Esophagus squamous epithelium (tissue), 5 donors: ENCODE measurements at regions of chr14 and their contacts with region 1.

Region 1: DNA sequence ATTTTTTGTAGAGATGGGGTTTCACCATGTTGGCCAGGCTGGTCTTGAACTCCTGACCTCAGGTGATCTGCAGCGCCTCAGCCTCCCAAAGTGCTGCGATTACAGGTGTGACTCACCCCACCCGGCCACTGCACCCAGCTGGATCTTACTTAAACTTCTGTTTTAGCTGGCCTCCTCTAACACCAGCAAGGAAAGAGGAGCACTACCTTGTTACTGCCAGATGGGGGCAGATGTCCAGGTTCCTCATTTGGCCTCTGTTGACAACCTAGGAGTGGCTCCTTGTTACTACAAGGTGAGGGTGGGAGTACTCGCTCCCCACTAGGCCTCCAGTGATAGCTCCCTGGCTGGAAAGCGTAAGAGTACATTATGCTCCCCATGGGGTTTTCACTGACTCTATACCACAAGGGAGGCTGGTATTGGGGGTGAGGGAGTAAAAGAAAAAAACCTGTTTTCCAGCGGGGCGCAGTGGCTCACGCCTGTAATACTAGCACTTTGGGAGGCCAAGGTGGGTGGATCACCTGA is 13.1 kb upstream of the ARF6 start:
- DNase-seq: no peak
- H3K4me3 ChIP-seq: no peak overlapping the region
- H3K27ac ChIP-seq: peak overlapping the region; percentile 51 to 86 (median 72)
- H3K4me1 ChIP-seq: peaks cover 0 to 37% (median 12%) of the 10 kb centered on the region in 3 donors
- H3K27me3 ChIP-seq: no peaks in the 10 kb centered on the region
- CTCF ChIP-seq: peak; percentile 20 to 84 (median 60)
- POLR2A ChIP-seq: no peak

Region 2: DNA sequence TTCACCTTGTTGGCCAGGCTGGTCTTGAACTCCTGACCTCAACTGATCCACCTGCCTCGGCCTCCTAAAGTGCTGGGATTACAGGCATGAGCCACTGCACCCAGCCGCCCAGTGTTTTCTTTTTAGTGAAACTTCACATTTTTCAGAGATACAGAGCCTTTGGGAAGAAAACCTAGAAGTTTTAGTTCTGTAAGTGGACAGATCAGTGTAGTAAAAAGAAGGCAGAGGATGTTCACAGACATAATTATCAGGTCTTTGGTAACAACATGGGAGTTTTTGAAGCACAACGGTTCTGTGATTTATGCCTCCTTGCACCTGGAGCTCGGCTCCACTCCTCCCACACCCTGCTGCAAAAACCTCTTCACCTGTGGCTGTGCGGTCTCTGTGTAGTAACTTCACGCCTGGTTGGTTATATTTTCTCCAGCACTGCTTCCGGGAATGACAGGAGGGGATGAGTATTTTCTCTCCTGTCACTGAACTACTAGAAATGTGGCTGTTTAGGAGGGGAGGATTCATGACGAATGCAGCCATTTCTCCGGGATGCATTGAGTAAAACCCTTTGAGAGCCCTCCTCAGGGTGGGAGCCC is 80.2 kb after region 1 on chr14:
- intact Hi-C with region 1: loop called (anchors 10 kb)
- DNase-seq: no peak
- H3K4me3 ChIP-seq: peak overlapping the region in 1 of 4 donors; percentile 10
- H3K27ac ChIP-seq: peak overlapping the region; percentile 70 to 91 (median 88)
- H3K4me1 ChIP-seq: peaks cover 11 to 71% (median 35%) of the 10 kb centered on the region in 3 donors
- H3K27me3 ChIP-seq: no peaks in the 10 kb centered on the region
- CTCF ChIP-seq: no peak
- POLR2A ChIP-seq: no peak

Region 3: DNA sequence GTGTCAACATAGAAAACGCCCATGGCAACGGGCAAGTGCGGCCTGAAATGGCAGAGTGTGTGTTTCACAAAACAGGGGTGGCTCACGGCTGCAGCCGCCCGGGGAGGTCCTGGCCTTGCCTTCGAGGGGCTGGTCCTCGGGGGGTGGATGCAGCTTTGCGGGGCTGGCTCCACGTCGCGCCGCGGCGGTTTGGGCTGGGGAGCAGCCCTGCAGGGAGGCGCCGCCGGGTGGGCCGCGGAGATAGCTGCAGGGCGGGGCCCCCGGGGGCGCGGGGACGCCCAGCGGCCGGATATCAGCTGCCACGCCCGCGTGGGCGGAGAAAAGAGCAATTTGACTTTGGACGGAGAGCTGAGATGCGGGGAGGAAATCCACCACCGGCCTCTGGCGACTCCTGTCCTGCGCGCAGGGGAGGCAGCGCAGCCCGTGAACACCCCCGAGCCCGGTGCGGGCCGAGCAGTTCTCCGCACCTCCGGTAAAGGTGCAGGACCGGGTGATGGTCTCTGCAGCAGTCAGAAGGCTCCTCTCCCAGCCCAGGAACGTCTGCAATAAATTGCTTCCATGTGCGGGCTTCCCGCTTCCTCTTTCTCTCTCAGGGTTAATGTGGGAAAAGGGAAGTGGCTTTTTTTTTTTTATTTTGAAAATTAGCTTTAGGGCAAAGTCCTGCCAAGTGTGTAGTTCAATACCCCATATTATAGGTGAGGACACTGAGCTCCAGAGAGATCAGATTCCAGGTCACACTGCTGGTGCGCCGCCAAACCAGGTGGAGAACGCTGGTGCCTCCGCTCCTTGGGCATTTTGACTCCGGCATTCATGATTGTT is 123.7 kb after region 1 on chr14:
- intact Hi-C with region 1: loop called (anchors 10 kb)
- DNase-seq: peak; percentile 43
- H3K4me3 ChIP-seq: peak overlapping the region; percentile 33 to 67 (median 56)
- H3K27ac ChIP-seq: peak overlapping the region; percentile 92 to 98 (median 96)
- H3K4me1 ChIP-seq: peaks cover 55 to 86% (median 57%) of the 10 kb centered on the region in 3 donors
- H3K27me3 ChIP-seq: no peaks in the 10 kb centered on the region
- CTCF ChIP-seq: peak in 5 of 6 experiments; percentile 16 to 47 (median 34)
- POLR2A ChIP-seq: peak in 2 of 4 donors; percentile 62 to 87

Region 4: DNA sequence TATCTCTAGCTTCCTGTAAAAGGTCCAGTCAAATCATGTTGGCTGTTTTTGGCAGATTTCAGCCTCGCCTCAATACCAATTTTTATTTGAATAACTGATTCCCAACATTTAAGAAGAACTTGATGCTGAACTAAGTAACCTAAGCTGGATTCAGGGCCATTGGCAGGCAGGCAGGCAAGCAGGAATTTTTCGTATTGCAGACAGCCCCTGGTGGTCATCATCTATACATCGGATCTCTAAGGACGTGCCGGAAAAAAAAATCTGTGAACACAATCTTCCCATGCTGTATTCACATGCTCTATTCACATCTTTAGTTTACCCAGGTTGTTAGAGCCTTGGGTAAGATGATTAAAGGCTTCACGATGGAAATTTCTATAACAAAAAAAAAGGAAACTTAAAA is 229.6 kb after region 1 on chr14:
- intact Hi-C with region 1: loop called (anchors 10 kb)
- DNase-seq: no peak
- H3K4me3 ChIP-seq: no peak overlapping the region
- H3K27ac ChIP-seq: peak overlapping the region in 2 of 4 donors; percentile 36 to 50
- H3K4me1 ChIP-seq: peaks cover 0 to 27% (median 2%) of the 10 kb centered on the region in 3 donors
- H3K27me3 ChIP-seq: no peaks in the 10 kb centered on the region
- CTCF ChIP-seq: no peak
- POLR2A ChIP-seq: no peak